ENCODE measurements at regions of chr6 and their contacts with region 1.

Region 1: DNA sequence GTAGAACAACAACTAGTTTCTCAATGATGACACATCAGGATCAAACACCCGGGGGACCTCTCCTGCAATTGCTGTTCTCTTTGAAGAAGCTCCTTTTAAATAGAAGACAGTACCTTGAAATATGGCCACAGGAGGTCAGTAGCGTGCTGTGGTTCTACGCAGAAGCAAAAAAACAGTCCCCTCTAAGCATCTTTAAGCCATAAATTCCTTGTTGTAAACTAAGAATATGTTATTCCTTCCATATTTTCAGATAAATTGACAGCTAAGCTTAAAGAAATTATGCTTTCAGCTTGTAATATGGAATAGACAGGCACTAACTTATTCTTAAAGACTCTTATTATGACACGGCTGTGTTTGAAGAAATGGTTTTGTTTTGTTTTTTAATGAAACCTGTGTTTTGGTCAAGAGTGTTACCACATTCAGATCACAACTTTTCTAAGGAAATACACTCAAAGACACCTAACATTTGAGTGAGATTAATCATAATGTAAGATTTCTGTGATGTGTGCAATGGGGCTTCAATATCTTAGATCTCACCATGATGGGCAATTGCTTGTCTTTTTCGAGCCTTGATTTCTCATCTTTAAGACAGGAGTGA is 49.7 kb upstream of the IL20RA start:
- DNase-seq: peak; percentile 63
- H3K4me3 ChIP-seq: no peak overlapping the region
- H3K27ac ChIP-seq: no peak overlapping the region
- H3K4me1 ChIP-seq: no peaks in the 10 kb centered on the region
- H3K27me3 ChIP-seq: no peaks in the 10 kb centered on the region
- CTCF ChIP-seq: peak in 3 of 4 experiments; percentile 76 to 80 (median 78)
- POLR2A ChIP-seq: no peak

Region 2: DNA sequence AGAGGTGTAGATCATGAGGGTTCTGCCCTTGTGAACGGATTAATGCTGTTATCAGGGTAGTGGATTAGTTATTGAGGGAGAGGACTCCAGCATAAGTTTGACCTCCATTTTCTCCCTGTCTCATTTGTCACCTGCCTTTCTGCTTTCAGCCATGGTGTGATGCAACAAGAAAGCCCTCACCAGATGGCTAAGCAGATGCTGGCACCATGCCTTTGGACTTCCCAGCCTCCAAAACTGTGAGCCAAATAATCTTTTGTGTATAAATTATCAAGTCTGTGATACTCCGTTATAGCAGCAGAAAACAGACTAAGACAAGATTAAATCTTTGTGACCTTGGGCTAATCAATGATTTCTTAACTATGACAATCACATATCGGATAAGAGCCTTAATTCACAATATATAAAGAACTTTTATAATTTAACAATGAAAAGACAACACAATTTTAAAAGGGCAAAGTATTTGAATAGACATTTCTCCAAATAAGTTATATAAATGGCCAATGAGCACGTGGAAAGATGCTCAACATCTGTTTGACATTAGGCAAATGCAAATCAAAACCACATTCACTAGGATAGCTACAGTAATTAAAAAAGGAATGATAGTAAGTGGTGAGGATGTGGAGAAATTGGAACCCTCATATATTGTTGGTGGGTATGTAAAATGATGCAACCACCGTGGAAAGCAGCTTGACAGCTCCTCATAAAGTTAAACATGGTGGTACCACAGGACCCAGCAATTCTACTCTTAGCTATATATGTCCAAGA is 170.0 kb after region 1 on chr6:
- intact Hi-C with region 1: loop called (anchors 5 kb)
- DNase-seq: no peak
- H3K4me3 ChIP-seq: no peak overlapping the region
- H3K27ac ChIP-seq: no peak overlapping the region
- H3K4me1 ChIP-seq: peaks cover 4% of the 10 kb centered on the region
- H3K27me3 ChIP-seq: no peaks in the 10 kb centered on the region
- CTCF ChIP-seq: no peak
- POLR2A ChIP-seq: no peak

Region 3: DNA sequence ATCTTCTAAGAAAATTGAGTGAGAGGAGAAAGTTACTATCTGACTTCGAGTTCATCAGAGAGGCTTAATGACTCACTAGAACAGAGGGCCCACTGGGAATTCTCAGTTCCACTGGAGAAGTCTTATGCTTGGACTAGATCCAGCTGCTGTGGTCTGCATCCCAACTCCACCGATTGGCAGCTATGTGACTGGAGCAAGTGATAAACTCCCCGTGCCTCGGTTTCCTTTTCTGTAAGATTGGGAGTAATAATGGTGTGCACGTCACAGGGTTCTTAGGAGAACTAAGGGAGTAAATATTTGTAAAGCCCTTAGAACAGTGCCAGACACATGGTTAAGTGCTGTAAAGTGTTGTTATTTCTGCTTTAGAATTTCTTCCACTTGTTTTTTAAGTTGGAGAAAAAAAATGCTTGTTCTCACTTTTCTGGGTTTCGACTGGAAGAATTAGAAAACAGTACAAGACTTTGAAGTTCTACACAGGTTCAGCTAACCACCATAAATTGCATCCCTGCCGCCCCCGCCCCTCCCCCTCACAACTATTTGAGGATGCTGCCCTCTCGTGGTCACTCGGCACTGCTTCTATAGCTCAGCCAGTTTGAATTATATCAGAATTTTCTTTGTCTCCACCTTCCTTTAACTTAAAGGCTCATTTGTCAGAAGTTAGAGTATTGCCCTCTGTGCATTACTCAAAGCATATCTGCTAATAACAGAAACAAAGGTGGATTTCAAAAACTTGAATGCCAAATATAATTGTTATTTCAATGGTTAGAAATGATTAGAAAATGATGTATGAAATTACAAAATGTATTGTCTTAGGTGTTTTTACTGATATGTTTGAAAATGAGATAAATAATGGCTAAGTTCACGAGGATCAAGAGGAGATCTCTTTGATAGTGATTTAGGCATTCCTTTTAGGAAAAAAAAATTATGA is 219.7 kb after region 1 on chr6:
- intact Hi-C with region 1: loop called (anchors 2 kb)
- DNase-seq: peak; percentile 60
- H3K4me3 ChIP-seq: no peak overlapping the region
- H3K27ac ChIP-seq: no peak overlapping the region
- H3K4me1 ChIP-seq: no peaks in the 10 kb centered on the region
- H3K27me3 ChIP-seq: no peaks in the 10 kb centered on the region
- CTCF ChIP-seq: peak; percentile 61 to 88 (median 80)
- POLR2A ChIP-seq: no peak

Region 4: DNA sequence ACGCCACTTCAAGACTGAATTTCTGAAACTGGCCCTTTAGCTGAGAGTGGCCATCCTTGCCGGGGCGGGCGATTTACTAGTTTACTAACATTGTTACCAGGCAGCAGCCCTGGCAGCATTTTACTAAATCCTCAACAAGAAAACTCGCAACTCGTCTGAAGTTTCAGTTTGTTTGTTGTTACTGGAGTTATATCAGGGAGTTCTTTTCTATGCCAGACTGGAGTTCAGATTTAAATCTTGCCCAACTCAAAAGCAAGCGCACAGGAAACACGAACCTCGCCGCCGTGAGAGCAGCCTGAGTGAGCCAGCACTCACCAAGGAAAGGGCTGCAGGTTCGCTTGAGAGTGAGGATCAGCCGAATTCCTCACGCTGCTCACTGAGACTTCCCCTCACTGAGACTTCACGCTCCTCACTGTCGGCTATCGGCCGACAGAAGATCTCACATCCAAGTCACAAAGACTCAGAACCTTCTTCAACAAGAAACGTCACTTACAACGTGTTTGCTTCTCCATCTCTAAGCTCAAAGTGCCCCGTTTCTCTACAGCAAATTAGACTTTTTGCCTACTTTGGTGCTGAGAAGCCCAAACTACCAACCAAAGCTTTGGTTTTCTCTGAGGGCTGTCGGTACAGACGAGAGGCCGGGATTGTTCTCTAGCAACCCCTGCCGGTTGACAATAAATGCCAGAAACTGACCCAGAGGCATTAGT is 320.8 kb after region 1 on chr6:
- intact Hi-C with region 1: loop called (anchors 5 kb)
- DNase-seq: peak; percentile 33
- H3K4me3 ChIP-seq: peak overlapping the region; percentile 8 to 23
- H3K27ac ChIP-seq: peak overlapping the region; percentile 37 to 50
- H3K4me1 ChIP-seq: no peaks in the 10 kb centered on the region
- H3K27me3 ChIP-seq: no peaks in the 10 kb centered on the region
- CTCF ChIP-seq: peak in 3 of 4 experiments; percentile 51 to 61 (median 54)
- POLR2A ChIP-seq: no peak